ENCODE measurements at regions of chr5 and their contacts with region 1.

Region 1: GRCh38 chr5:29811914-29812679 is 1381.4 kb upstream of the CDH6 start:
- DNase-seq: peak; percentile 34 to 47
- H3K4me3 ChIP-seq: no peak overlapping the region
- H3K4me3 Mint-ChIP-seq: no peak overlapping the region
- H3K27ac Mint-ChIP-seq: no peak overlapping the region
- H3K4me1 ChIP-seq: no peaks in the 10 kb centered on the region
- H3K4me1 Mint-ChIP-seq: peaks cover 14% of the 10 kb centered on the region
- H3K27me3 ChIP-seq: no peaks in the 10 kb centered on the region
- H3K27me3 Mint-ChIP-seq: no peaks in the 10 kb centered on the region
- CTCF ChIP-seq: peak; percentile 25 to 32

Region 2: DNA sequence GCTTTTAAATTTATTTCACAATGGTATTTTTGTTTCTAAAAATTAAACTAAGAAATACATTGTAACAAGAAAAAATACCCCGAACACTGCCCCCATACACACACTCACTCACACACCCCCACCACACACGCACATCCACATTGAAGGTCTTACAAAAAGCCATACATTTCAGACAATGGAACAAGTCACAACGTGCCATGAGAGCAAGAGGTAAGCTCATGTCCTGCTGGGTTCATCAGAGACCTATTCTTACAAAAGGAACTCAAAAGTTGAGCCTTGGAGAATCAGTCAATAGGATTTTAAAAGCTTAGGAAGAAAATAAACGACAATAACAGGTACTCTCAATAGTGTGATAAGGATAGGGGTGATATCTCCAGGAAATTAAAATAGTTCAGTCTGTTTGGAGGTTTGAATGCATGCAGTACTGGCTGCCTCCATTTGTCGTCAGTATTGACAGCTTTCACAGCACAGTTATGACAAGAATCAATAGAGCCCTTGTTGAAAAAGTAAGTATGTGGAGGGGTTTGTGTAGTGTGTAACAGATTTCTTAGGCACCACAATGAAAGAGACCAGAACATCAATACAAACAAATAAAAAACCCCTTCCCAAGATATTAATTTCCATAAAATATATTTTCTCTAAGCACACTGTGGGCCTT is 444.8 kb before region 1 on chr5:
- CTCF ChIA-PET with region 1: no interaction called
- POLR2A ChIA-PET with region 1: no interaction called
- intact Hi-C with region 1: loop called (anchors 1 kb)
- DNase-seq: peak; percentile 18 to 26
- H3K4me3 ChIP-seq: no peak overlapping the region
- H3K4me3 Mint-ChIP-seq: no peak overlapping the region
- H3K27ac Mint-ChIP-seq: no peak overlapping the region
- H3K4me1 ChIP-seq: no peaks in the 10 kb centered on the region
- H3K4me1 Mint-ChIP-seq: no peaks in the 10 kb centered on the region
- H3K27me3 ChIP-seq: no peaks in the 10 kb centered on the region
- H3K27me3 Mint-ChIP-seq: no peaks in the 10 kb centered on the region
- CTCF ChIP-seq: peak; percentile 53 to 58

Region 3: GRCh38 chr5:29697785-29698414 is 114.2 kb before region 1 on chr5:
- CTCF ChIA-PET with region 1: no interaction called
- POLR2A ChIA-PET with region 1: no interaction called
- intact Hi-C with region 1: loop called (anchors 1 kb)
- DNase-seq: peak in 1 of 2 experiments; percentile 33
- H3K4me3 ChIP-seq: no peak overlapping the region
- H3K4me3 Mint-ChIP-seq: no peak overlapping the region
- H3K27ac Mint-ChIP-seq: no peak overlapping the region
- H3K4me1 ChIP-seq: no peaks in the 10 kb centered on the region
- H3K4me1 Mint-ChIP-seq: no peaks in the 10 kb centered on the region
- H3K27me3 ChIP-seq: no peaks in the 10 kb centered on the region
- H3K27me3 Mint-ChIP-seq: no peaks in the 10 kb centered on the region
- CTCF ChIP-seq: peak; percentile 57 to 59

Region 4: GRCh38 chr5:29720954-29721353 is 91.1 kb before region 1 on chr5:
- CTCF ChIA-PET with region 1: no interaction called
- POLR2A ChIA-PET with region 1: no interaction called
- intact Hi-C with region 1: loop called (anchors 1 kb)
- DNase-seq: peak in 1 of 2 experiments; percentile 8
- H3K4me3 ChIP-seq: no peak overlapping the region
- H3K4me3 Mint-ChIP-seq: no peak overlapping the region
- H3K27ac Mint-ChIP-seq: no peak overlapping the region
- H3K4me1 ChIP-seq: no peaks in the 10 kb centered on the region
- H3K4me1 Mint-ChIP-seq: no peaks in the 10 kb centered on the region
- H3K27me3 ChIP-seq: no peaks in the 10 kb centered on the region
- H3K27me3 Mint-ChIP-seq: no peaks in the 10 kb centered on the region
- CTCF ChIP-seq: peak in 1 of 2 experiments; percentile 28

Region 5: DNA sequence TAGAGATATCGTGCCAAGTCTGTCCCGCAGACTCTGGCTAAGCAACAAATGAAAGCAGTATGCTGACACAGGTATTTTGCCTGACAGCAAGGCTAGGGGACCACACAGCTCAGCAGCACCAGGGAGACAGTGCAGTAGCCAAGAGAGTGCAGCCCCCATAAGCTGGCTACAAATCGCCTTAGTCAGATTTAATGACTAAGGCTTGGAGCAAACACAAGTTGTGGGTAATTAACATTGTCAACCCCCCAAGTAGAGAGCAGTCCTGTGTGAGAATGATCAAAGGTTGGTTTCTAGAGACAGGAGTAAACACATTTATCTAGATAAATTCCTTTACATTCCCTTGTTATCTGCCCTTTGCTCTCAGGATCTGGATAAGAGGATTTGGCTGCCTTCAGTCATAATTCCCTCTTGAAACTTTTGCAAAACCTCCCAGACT is 53.1 kb before region 1 on chr5:
- CTCF ChIA-PET with region 1: no interaction called
- POLR2A ChIA-PET with region 1: no interaction called
- intact Hi-C with region 1: loop called (anchors 1 kb)
- DNase-seq: peak; percentile 75 to 90
- H3K4me3 ChIP-seq: no peak overlapping the region
- H3K4me3 Mint-ChIP-seq: peak overlapping the region; percentile 61
- H3K27ac Mint-ChIP-seq: peak overlapping the region; percentile 85
- H3K4me1 ChIP-seq: peaks cover 32% of the 10 kb centered on the region
- H3K4me1 Mint-ChIP-seq: peaks cover 8% of the 10 kb centered on the region
- H3K27me3 ChIP-seq: no peaks in the 10 kb centered on the region
- H3K27me3 Mint-ChIP-seq: no peaks in the 10 kb centered on the region
- CTCF ChIP-seq: no peak

Region 6: DNA sequence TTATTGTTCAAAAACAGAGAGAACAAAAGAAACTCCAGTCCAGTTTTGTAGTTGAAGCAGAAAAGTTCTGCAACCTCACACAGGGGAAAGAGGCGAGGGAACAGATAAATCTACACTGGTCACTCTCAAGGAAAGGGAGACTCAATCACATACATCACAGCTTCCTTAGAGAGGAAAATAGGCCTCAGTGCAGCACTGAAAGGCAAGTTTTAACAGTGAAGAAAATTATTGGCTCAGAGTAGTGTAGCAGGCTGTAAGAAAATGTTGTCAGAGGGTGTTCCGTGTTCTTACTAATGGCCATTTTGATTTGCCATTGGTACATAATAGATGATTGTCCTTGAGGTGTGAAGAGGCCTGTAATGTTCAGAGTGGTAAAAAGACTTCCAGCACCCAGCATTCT is 851.4 kb after region 1 on chr5:
- CTCF ChIA-PET with region 1: no interaction called
- POLR2A ChIA-PET with region 1: no interaction called
- intact Hi-C with region 1: no loop called
- DNase-seq: no peak
- H3K4me3 ChIP-seq: no peak overlapping the region
- H3K4me3 Mint-ChIP-seq: no peak overlapping the region
- H3K27ac Mint-ChIP-seq: no peak overlapping the region
- H3K4me1 ChIP-seq: no peaks in the 10 kb centered on the region
- H3K4me1 Mint-ChIP-seq: no peaks in the 10 kb centered on the region
- H3K27me3 ChIP-seq: no peaks in the 10 kb centered on the region
- H3K27me3 Mint-ChIP-seq: peaks cover 3% of the 10 kb centered on the region
- CTCF ChIP-seq: no peak

Measured in Caco-2 (cell line).